Dorsolateral prefrontal cortex (tissue), 120 donors: ENCODE measurements at regions of chrX and their contacts with region 1.

Region 1: DNA sequence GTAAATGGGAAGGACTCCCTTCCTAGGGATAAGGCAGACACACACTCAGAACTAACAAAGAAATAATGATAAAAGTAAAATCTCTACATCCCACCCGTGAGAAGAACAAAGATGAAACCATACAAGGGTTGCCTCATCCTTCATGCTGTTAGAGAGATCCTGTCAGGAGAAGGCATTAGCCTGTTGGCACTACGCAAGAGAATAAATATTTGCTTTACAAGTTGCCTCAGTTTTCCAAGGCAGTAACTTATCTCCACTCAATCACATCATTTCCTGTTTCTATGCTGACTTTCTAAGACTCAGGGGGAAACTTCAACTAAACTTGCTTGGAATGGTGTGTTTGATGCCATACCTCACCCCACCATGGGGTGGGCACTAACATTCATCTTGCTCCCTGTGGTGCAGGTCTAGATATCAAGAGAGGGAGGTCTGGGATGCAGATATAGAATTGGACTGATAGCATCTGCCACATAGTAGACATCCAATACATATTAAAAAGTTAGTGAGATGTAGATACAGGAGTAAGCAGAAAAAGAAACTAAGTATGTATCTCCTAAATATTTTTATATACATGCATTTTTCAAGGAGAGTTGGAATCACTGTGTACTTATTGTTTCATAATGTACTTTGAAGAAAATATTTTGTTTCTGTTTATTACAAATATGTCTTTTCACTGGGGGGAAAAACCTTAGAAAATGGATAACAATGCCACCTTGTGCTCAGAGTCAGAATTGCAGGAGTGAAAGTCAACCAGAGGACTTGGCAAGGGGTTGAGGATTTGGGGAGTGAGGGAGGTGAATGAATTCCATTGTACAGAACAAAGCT is 57.2 kb upstream of the BEX4 start:
- DNase-seq: peak in 2 of 10 donors; percentile 5 to 9
- H3K4me3 ChIP-seq: no peak overlapping the region
- H3K27ac ChIP-seq: peak overlapping the region in 6 of 59 donors; percentile 4 to 66 (median 28)
- H3K27me3 ChIP-seq: peaks cover 0 to 38% (median 3%) of the 10 kb centered on the region in 45 donors
- CTCF ChIP-seq: peak in 55 of 56 donors; percentile 48 to 80 (median 66)

Region 2: GRCh38 chrX:101977106-101977505 is 1180.6 kb before region 1 on chrX:
- intact Hi-C with region 1: no loop called
- DNase-seq: no peak
- H3K4me3 ChIP-seq: no peak overlapping the region
- H3K27ac ChIP-seq: no peak overlapping the region
- H3K27me3 ChIP-seq: peaks cover 0 to 57% (median 19%) of the 10 kb centered on the region in 45 donors
- CTCF ChIP-seq: no peak

Region 3: DNA sequence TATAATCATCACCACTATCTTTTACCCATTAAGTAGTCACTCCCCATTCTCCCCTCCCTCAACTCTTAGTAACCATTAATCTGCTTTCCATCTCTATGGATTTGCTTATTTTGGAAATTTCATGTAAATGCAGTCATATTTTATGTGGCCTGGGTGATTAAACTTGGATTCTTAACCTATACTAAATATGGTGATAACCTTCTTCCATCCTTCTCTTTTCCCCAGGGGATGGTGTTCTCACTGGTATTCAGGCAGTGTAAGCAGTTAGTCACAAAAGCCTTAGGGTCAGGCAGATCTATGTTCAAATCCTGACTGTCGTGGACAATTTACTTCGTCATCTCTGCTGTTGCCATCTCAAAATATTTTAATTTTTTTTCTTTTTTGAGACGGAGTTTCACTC is 191.0 kb before region 1 on chrX:
- intact Hi-C with region 1: no loop called
- DNase-seq: no peak
- H3K4me3 ChIP-seq: no peak overlapping the region
- H3K27ac ChIP-seq: no peak overlapping the region
- H3K27me3 ChIP-seq: peaks cover 0 to 52% (median 13%) of the 10 kb centered on the region in 45 donors
- CTCF ChIP-seq: no peak

Region 4: DNA sequence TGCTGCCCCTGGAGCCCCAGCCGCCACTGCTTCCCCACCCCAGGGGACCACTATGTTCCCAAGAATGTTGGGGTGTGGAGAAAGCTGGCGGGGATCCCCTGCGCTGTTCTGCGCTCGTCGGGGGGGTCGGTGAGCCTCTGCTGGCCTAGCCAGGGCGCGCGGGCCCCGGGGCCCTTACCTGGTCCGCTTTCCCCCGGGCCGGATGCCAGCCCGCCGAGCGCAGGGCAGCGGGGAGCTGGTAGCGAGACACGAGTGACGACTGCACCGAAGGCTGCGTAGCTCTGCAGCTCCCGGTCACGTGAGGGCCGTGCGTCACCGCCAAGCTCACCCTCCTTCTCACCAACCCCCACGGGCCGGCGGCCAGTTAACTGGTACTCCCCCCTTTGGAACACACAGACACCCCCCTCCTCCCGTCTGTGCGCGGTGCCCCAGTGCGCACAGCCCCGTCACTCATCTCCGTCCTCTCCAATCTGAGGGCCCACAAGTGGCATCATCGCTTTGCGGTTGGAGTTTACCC is 93.7 kb before region 1 on chrX and contains the start of gene BEX1:
- intact Hi-C with region 1: loop called (anchors 10 kb)
- DNase-seq: peak; percentile 84 to 95 (median 89)
- H3K4me3 ChIP-seq: peak within 1 kb of the TSS; percentile 15 to 75 (median 60)
- H3K27ac ChIP-seq: peak within 1 kb of the TSS in 57 of 59 donors; percentile 22 to 91 (median 77)
- H3K27me3 ChIP-seq: peaks cover 0 to 64% (median 16%) of the 10 kb centered on the region in 45 donors
- CTCF ChIP-seq: peak in 1 of 56 donors; percentile 13
- total RNA-seq, gene BEX1: 53.1 to 455 (median 280) TPM

Region 5: GRCh38 chrX:103124284-103124683 is 33.4 kb before region 1 on chrX:
- intact Hi-C with region 1: no loop called
- DNase-seq: no peak
- H3K4me3 ChIP-seq: no peak overlapping the region
- H3K27ac ChIP-seq: no peak overlapping the region
- H3K27me3 ChIP-seq: peaks cover 0 to 80% (median 16%) of the 10 kb centered on the region in 45 donors
- CTCF ChIP-seq: no peak